ENCODE measurements at regions of chr12 and their contacts with region 1.

Region 1: DNA sequence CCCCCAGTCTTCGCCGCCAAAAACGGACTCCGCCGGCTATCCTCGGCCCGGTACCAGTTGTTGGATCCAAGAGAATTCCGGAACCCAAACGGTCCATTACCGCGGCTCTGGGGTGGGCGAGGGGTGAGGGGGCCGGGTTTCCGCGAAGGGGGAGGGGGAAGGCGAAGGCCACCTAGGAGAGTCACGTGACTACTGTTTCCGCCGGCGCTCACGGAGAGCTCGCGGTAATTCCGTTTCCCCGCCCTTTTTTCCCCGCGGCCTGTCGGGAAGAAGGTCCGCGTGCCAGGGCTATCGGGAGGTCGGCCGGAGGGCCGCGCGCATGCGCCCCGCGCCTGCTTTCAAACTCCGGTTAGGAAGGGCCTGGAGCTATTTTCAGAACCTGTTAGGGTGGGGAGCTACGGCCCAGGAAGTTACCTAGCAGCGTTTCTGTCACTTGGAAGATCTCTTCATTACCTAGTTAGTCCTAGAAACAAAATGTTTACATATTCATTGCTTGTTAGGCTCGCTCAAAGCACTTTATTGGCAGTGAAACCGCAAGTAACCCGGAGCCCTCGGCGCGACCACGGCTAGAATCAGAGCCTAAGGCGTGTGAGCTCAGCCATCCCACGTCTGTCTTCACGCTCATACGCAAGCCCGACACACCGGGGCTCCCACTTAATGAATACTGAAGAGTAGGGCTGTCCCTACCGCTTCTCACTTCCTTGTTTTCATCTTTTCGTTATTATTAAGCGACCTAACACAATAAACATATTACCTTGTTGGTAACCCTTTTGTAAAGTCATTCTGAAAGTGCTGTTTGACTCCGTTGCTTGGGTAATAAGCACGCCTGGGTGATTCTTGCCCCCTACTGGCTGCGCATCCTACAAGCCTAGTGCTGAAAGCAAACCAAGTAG is 624 bp upstream of the SBNO1 start:
- DNase-seq: peak; percentile 97
- H3K4me3 Mint-ChIP-seq: peak overlapping the region; percentile 82
- H3K27ac Mint-ChIP-seq: peak overlapping the region; percentile 93
- H3K4me1 Mint-ChIP-seq: peaks cover 8% of the 10 kb centered on the region
- H3K27me3 Mint-ChIP-seq: no peaks in the 10 kb centered on the region

Region 2: GRCh38 chr12:123278101-123278627 is 87.1 kb before region 1 on chr12:
- intact Hi-C with region 1: loop called (anchors 2 kb)
- DNase-seq: no peak
- H3K4me3 Mint-ChIP-seq: no peak overlapping the region
- H3K27ac Mint-ChIP-seq: peak overlapping the region; percentile 96
- H3K4me1 Mint-ChIP-seq: peaks cover 4% of the 10 kb centered on the region
- H3K27me3 Mint-ChIP-seq: no peaks in the 10 kb centered on the region

Region 3: DNA sequence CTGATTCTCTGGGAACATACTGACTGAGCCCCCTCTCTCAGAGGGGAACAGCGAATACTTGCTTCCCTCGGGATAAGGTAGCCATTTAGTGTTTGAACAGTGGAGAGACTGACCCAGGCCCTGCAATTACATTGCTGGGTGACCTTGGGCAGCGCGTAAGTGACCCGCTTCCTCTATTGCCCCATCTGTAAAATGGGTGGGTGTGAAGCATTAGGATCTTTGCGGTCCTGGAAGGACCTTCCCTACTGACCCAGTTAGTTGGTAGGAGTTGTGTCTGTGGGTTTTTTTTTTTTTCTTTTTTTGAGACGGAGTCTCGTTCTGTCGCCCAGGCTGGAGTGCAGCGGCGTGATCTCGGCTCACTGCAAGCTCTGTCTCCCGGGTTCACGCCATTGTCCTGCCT is 17.4 kb after region 1 on chr12:
- intact Hi-C with region 1: loop called (anchors 1 kb)
- DNase-seq: no peak
- H3K4me3 Mint-ChIP-seq: peak overlapping the region; percentile 27
- H3K27ac Mint-ChIP-seq: no peak overlapping the region
- H3K4me1 Mint-ChIP-seq: peaks cover 18% of the 10 kb centered on the region
- H3K27me3 Mint-ChIP-seq: no peaks in the 10 kb centered on the region

Region 4: GRCh38 chr12:123388177-123388947 is 23.1 kb after region 1 on chr12:
- intact Hi-C with region 1: loop called (anchors 1 kb)
- DNase-seq: peak; percentile 75
- H3K4me3 Mint-ChIP-seq: peak overlapping the region; percentile 81
- H3K27ac Mint-ChIP-seq: peak overlapping the region; percentile 90
- H3K4me1 Mint-ChIP-seq: peaks cover 36% of the 10 kb centered on the region
- H3K27me3 Mint-ChIP-seq: no peaks in the 10 kb centered on the region

Region 5: DNA sequence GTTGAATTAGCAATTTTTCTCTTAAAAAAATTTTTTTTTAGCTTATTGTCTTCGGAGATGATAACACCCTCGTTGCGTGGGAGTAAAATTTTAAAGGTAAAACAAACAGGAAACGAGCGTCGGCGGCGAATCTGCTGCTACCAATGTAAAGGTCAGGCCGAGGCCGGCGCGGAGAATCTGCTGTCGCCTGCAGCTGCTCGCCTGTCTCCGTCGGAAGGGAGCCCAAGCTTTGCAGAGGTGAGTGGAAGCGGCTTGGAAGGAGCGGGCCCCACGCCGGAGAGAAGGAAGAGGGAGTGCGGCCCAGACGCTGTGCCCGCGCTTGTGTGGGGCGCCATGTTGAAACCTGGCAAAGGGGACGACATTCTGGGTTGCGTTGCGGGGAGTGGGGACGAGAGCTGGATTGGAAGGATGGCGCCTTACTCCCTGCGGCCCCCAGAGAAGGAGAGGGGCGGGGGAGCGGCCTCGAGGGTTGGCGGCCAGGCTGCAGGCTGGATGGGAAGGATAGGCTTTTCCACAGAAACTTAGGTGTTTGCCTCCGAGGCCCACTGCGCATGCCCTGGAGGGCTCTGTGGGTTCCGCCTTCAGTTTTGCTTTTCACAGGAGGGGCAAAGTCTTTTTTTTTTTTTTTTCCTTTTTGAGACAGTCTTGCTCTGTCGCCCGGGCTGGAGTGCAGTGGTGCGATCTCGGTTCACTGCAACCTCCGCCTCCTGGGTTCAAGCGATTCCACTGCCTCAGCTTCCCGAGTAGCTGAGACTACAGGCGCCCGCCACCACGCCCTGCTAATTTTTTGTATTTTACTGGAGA is 92.9 kb after region 1 on chr12 and contains the start of gene SNRNP35:
- intact Hi-C with region 1: loop called (anchors 2 kb)
- DNase-seq: peak; percentile 81
- H3K4me3 Mint-ChIP-seq: peak within 1 kb of the TSS; percentile 94
- H3K27ac Mint-ChIP-seq: peak within 1 kb of the TSS; percentile 99
- H3K4me1 Mint-ChIP-seq: peaks cover 15% of the 10 kb centered on the region
- H3K27me3 Mint-ChIP-seq: no peaks in the 10 kb centered on the region
- total RNA-seq, gene SNRNP35: 27.1 and 36.4 TPM in 2 replicates